ENCODE measurements at regions of chr10 and their contacts with region 1.

Region 1: DNA sequence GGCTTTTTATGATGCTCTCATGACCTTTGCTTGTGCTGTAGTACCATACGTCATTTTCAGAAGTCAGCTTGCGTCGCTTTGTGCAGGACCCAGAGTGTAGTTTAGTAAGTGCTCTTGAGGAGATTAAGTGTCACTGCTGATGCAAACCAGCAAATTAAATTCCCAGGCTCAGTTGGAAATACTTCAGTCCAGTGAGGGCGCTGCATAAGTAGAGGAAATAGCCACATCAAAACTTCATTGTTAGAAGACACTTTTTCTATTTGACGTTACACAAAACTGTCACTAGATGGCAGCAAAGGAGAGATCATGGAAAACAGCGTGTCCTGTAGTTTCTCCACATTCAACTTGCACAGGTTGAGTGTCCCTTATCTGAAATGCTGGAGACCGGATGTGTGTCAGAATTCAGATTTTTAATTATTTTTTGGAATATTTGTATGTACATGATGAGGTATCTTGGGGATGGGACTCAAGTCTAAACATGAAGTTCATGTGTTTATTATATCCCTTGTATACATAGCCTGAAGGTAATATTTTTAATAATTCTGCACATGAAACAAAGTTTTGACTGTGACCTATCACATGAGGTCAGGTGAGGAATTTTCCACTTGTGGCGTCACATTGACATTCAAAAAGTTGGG is 7.9 kb downstream of the ZNF22 start:
- DNase-seq: peak; percentile 94
- H3K4me3 ChIP-seq: no peak overlapping the region
- H3K27ac ChIP-seq: no peak overlapping the region
- H3K4me1 ChIP-seq: peaks cover 4% of the 10 kb centered on the region
- H3K27me3 ChIP-seq: no peaks in the 10 kb centered on the region
- CTCF ChIP-seq: peak; percentile 70 to 77
- POLR2A ChIP-seq: no peak

Region 2: GRCh38 chr10:44932517-44933450 is 75.9 kb before region 1 on chr10:
- CTCF ChIA-PET with region 1: interaction called, 62 read pairs
- POLR2A ChIA-PET with region 1: no interaction called
- dilution Hi-C with region 1: no loop called
- intact Hi-C with region 1: loop called (anchors 2 kb)
- DNase-seq: peak; percentile 76
- H3K4me3 ChIP-seq: no peak overlapping the region
- H3K27ac ChIP-seq: no peak overlapping the region
- H3K4me1 ChIP-seq: no peaks in the 10 kb centered on the region
- H3K27me3 ChIP-seq: no peaks in the 10 kb centered on the region
- CTCF ChIP-seq: peak; percentile 88 to 98
- POLR2A ChIP-seq: no peak

Region 3: DNA sequence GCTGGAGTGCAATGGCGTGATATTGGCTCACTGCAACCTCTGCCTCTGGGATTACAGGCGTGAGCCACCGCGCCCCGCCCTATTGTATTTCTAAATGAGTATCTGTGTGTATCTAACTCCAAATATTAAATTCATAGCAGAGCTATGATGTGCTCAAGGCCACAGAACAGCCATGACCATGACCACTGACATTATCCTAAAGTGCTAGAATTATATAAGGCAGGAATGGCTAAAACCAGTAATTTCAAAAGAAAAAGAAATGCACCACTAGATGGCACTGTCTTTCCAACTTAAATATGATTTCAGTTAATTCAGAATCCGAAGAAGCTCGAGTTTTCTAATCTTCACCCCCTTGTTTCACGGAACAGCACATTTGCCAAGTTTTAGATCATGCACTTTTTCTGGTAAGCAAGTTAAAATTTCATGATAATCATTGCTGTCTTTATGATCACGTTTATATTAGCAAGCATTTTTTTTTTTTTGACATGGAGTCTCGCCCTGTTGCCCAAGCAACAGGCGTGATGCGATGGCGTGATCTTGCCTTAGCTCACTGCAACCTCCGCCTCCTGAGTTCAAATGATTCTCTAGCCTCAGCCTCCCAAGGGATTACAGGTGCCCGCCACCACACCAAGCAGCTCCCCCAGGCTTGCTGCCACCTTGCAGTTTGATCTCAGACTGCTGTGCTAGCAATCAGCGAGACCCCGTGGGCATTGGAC is 241.5 kb after region 1 on chr10:
- CTCF ChIA-PET with region 1: interaction called, 5 read pairs
- POLR2A ChIA-PET with region 1: no interaction called
- dilution Hi-C with region 1: no loop called
- intact Hi-C with region 1: loop called (anchors 2 kb)
- DNase-seq: peak; percentile 71
- H3K4me3 ChIP-seq: peak overlapping the region in 2 of 3 experiments; percentile 21 to 58
- H3K27ac ChIP-seq: peak overlapping the region; percentile 23
- H3K4me1 ChIP-seq: no peaks in the 10 kb centered on the region
- H3K27me3 ChIP-seq: peaks cover 0 to 3% of the 10 kb centered on the region in 2 experiments
- CTCF ChIP-seq: peak; percentile 11 to 28
- POLR2A ChIP-seq: no peak

Region 4: GRCh38 chr10:45464958-45465567 is 456.4 kb after region 1 on chr10:
- CTCF ChIA-PET with region 1: interaction called, 3 read pairs
- POLR2A ChIA-PET with region 1: no interaction called
- dilution Hi-C with region 1: no loop called
- intact Hi-C with region 1: loop called (anchors 2 kb)
- DNase-seq: peak; percentile 67
- H3K4me3 ChIP-seq: no peak overlapping the region
- H3K27ac ChIP-seq: no peak overlapping the region
- H3K4me1 ChIP-seq: peaks cover 3% of the 10 kb centered on the region
- H3K27me3 ChIP-seq: no peaks in the 10 kb centered on the region
- CTCF ChIP-seq: peak; percentile 92 to 98
- POLR2A ChIP-seq: no peak

Region 5: DNA sequence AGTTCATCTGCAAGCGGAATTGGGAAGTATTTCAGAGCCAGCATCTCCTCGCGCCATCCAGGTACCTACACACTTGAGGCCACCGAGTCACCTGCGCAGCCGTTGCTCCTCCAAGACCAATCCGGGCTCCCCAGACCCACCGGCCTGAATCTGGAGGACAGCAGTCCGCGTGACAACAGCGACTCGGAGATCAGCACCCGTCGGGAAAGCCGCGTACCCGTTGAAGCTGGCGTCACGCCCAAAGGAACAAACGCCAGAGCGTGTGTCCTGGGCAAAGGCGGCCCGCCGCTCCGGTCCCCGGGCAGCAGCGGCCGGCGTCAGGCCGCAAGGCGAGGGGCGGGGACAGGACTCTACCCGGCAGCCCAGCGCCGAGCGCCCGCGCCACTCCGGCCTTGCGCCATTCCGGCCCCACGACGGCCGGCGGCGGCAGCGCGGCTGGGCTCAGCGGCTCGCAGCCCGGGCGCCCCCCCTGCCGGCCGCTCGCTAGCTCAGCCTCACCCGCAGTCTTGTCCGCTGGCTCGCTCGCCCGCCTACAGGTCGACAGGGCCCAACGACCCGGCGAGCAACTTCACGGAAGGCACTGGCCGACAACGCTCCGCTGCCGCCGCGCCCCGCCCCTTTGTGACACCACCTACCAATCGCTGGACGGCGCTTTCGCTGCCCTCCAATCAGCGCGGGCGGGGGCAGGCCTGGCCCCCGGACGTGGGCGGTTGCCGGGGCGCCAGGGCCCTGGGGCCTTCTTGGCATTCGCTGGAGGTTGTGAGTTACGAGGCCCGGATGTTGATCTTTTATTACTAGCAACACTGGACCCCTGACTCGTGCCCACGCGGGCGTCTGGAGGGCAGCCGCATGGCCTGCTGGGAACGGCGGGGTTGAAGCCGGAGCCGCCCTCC is 663.8 kb after region 1 on chr10 and contains the start of gene ZFAND4:
- CTCF ChIA-PET with region 1: no interaction called
- POLR2A ChIA-PET with region 1: no interaction called
- dilution Hi-C with region 1: no loop called
- intact Hi-C with region 1: loop called (anchors 1 kb)
- DNase-seq: peak; percentile 97
- H3K4me3 ChIP-seq: peak within 1 kb of the TSS; percentile 33 to 78 (median 59)
- H3K27ac ChIP-seq: peak within 1 kb of the TSS; percentile 52
- H3K4me1 ChIP-seq: peaks cover 6% of the 10 kb centered on the region
- H3K27me3 ChIP-seq: no peaks in the 10 kb centered on the region
- CTCF ChIP-seq: peak; percentile 68 to 82
- POLR2A ChIP-seq: peak; percentile 55
- total RNA-seq, gene ZFAND4: 7.2 and 7.8 TPM in 2 replicates